ENCODE measurements at regions of chr2 and their contacts with region 1.

Region 1: DNA sequence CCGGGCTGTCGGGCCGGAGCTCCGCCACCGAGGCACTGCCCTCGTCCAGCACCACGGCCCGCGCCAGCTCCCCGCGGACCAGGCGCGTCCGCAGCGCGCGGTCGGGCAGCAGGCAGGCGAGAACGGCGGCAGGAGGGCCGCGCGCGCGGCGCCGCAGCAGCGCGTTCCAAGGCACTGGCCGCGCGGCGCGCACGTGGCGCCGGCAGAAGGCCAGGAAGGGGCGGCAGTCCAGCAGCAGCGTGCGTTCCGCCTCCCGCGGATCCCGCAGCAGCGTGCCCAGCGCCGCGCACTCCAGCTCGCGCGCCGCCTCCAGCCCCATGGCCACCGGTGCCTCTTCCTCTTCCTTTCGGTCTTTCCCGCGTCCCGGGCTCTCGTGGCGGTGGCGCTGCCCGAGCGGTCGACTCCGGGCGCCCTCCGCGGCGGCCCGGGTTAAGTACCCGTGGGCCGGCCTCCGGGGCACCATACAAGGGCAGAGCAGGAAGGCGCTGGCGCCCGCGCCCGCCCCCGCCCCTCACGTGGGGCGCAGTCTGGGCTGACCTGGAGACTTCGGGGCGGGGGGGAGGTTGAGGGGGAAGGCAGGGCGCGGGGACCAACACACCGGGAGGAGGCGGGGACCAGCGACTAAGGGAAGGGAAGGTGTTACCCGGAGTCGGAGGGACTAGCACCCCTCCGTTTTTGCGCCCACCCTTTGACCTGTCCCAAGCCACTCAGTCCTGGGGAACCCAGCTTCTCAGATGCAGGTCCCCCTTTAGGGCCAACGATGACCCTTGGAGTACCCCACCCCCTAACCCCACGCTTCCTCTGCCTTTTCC is at the start of gene DUSP2:
- DNase-seq: peak; percentile 96
- H3K4me3 Mint-ChIP-seq: peak within 1 kb of the TSS; percentile 96
- H3K27ac Mint-ChIP-seq: peak within 1 kb of the TSS; percentile 100
- H3K4me1 Mint-ChIP-seq: peaks cover 57% of the 10 kb centered on the region
- H3K27me3 Mint-ChIP-seq: peaks cover 4% of the 10 kb centered on the region
- total RNA-seq, gene DUSP2: 522 to 539 TPM

Region 2: GRCh38 chr2:96131152-96131812 is 14.0 kb before region 1 on chr2:
- CTCF ChIA-PET with region 1: interaction called, 4 read pairs
- POLR2A ChIA-PET with region 1: interaction called, 10 read pairs
- intact Hi-C with region 1: loop called (anchors 2 kb)
- DNase-seq: peak; percentile 78
- H3K4me3 Mint-ChIP-seq: peak overlapping the region; percentile 30
- H3K27ac Mint-ChIP-seq: peak overlapping the region; percentile 79
- H3K4me1 Mint-ChIP-seq: peaks cover 20% of the 10 kb centered on the region
- H3K27me3 Mint-ChIP-seq: no peaks in the 10 kb centered on the region

Region 3: GRCh38 chr2:96157651-96158553 is 12.7 kb after region 1 on chr2:
- CTCF ChIA-PET with region 1: interaction called, 80 read pairs
- POLR2A ChIA-PET with region 1: interaction called, 206 read pairs
- intact Hi-C with region 1: loop called (anchors 1 kb)
- DNase-seq: peak; percentile 99
- H3K4me3 Mint-ChIP-seq: peak overlapping the region; percentile 62
- H3K27ac Mint-ChIP-seq: peak overlapping the region; percentile 96
- H3K4me1 Mint-ChIP-seq: peaks cover 82% of the 10 kb centered on the region
- H3K27me3 Mint-ChIP-seq: no peaks in the 10 kb centered on the region

Region 4: GRCh38 chr2:96164459-96165184 is 19.4 kb after region 1 on chr2:
- CTCF ChIA-PET with region 1: interaction called, 80 read pairs
- POLR2A ChIA-PET with region 1: interaction called, 206 read pairs
- intact Hi-C with region 1: loop called (anchors 1 kb)
- DNase-seq: peak; percentile 90
- H3K4me3 Mint-ChIP-seq: peak overlapping the region; percentile 87
- H3K27ac Mint-ChIP-seq: peak overlapping the region; percentile 100
- H3K4me1 Mint-ChIP-seq: peaks cover 72% of the 10 kb centered on the region
- H3K27me3 Mint-ChIP-seq: no peaks in the 10 kb centered on the region

Region 5: DNA sequence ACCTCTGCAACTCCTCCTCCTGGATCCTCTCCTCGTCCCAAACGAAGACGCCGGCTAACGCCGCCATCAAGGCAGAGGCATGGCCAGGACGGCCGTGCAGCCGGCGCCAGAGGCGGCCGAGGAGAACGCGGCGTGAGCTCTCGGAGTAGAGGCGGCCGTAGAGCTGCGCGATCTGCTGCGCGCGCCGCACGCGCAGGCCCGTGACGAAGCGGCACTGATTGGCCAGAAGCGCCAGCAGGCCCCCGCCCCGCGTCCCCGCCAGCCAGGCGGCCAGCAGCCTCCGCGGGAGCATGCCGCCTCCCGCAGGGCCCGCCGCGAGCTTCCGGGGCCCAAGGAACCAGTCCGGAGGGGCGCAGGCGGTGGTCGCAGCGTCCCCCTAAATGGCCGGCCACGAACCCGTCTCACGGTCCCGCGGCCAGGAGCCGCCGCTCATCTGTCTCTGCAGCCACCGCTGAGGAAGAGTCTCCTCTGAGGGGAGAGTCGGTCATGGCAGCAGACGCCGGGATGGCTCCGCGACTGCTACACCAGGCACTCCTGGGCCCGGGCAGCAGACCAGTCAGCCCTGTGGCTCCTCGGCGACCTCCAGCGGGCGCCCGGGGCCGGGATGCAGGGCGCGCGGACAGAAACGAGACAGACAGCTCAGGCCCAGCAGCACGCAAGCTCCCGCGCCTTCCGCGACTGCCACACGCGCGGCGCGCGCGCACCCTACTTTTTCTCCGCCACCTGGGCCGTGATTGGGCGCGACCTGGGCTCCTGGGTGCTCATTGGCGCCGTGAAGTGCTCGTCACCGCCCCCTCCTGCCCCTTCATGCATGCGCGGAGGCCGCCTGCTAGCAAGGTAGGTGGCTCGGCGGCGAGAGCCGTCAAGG is 63.1 kb after region 1 on chr2 and contains the start of gene STARD7:
- CTCF ChIA-PET with region 1: interaction called, 6 read pairs
- POLR2A ChIA-PET with region 1: interaction called, 7 read pairs
- intact Hi-C with region 1: loop called (anchors 1 kb)
- DNase-seq: peak; percentile 99
- H3K4me3 Mint-ChIP-seq: peak within 1 kb of the TSS; percentile 98
- H3K27ac Mint-ChIP-seq: peak within 1 kb of the TSS; percentile 92
- H3K4me1 Mint-ChIP-seq: peaks cover 53% of the 10 kb centered on the region
- H3K27me3 Mint-ChIP-seq: no peaks in the 10 kb centered on the region
- total RNA-seq, gene STARD7: 173 to 181 TPM

Region 6: GRCh38 chr2:96241900-96242611 is 96.8 kb after region 1 on chr2:
- CTCF ChIA-PET with region 1: no interaction called
- POLR2A ChIA-PET with region 1: no interaction called
- intact Hi-C with region 1: loop called (anchors 2 kb)
- DNase-seq: peak; percentile 86
- H3K4me3 Mint-ChIP-seq: peak overlapping the region; percentile 28
- H3K27ac Mint-ChIP-seq: peak overlapping the region; percentile 94
- H3K4me1 Mint-ChIP-seq: peaks cover 47% of the 10 kb centered on the region
- H3K27me3 Mint-ChIP-seq: no peaks in the 10 kb centered on the region

Region 7: GRCh38 chr2:96638144-96639121 is 493.2 kb after region 1 on chr2 and contains the start of gene KANSL3:
- CTCF ChIA-PET with region 1: no interaction called
- POLR2A ChIA-PET with region 1: no interaction called
- intact Hi-C with region 1: loop called (anchors 5 kb)
- DNase-seq: peak; percentile 93
- H3K4me3 Mint-ChIP-seq: peak within 1 kb of the TSS; percentile 97
- H3K27ac Mint-ChIP-seq: peak within 1 kb of the TSS; percentile 90
- H3K4me1 Mint-ChIP-seq: peaks cover 28% of the 10 kb centered on the region
- H3K27me3 Mint-ChIP-seq: no peaks in the 10 kb centered on the region
- total RNA-seq, gene KANSL3: 33.7 to 39.4 TPM